OCI-LY7 (cell line): ENCODE measurements at regions of chr3 and their contacts with region 1.

Region 1: GRCh38 chr3:47324278-47324865 is 41.6 kb downstream of the KLHL18 start:
- DNase-seq: peak; percentile 81
- H3K4me3 ChIP-seq: no peak overlapping the region
- H3K27ac ChIP-seq: no peak overlapping the region
- H3K4me1 ChIP-seq: no peaks in the 10 kb centered on the region
- CTCF ChIP-seq: peak; percentile 88

Region 2: GRCh38 chr3:47250309-47251060 is 73.9 kb before region 1 on chr3:
- CTCF ChIA-PET with region 1: no interaction called
- POLR2A ChIA-PET with region 1: no interaction called
- intact Hi-C with region 1: loop called (anchors 1 kb)
- DNase-seq: peak; percentile 54
- H3K4me3 ChIP-seq: no peak overlapping the region
- H3K27ac ChIP-seq: no peak overlapping the region
- H3K4me1 ChIP-seq: no peaks in the 10 kb centered on the region
- CTCF ChIP-seq: peak; percentile 80

Region 3: GRCh38 chr3:47266709-47267489 is 57.5 kb before region 1 on chr3:
- CTCF ChIA-PET with region 1: no interaction called
- POLR2A ChIA-PET with region 1: no interaction called
- intact Hi-C with region 1: loop called (anchors 5 kb)
- DNase-seq: peak; percentile 42
- H3K4me3 ChIP-seq: no peak overlapping the region
- H3K27ac ChIP-seq: no peak overlapping the region
- H3K4me1 ChIP-seq: peaks cover 12% of the 10 kb centered on the region
- CTCF ChIP-seq: no peak

Region 4: GRCh38 chr3:47282424-47283192 is 41.8 kb before region 1 on chr3 and contains the starts of genes KIF9 and KLHL18:
- CTCF ChIA-PET with region 1: no interaction called
- POLR2A ChIA-PET with region 1: no interaction called
- intact Hi-C with region 1: loop called (anchors 5 kb)
- DNase-seq: peak; percentile 97
- H3K4me3 ChIP-seq: peak within 1 kb of the TSS; percentile 81
- H3K27ac ChIP-seq: peak within 1 kb of the TSS; percentile 71
- H3K4me1 ChIP-seq: peaks cover 45% of the 10 kb centered on the region
- CTCF ChIP-seq: no peak
- total RNA-seq, gene KIF9: 4.7 and 11.7 TPM in 2 replicates
- total RNA-seq, gene KLHL18: 11.8 and 13.1 TPM in 2 replicates

Region 5: DNA sequence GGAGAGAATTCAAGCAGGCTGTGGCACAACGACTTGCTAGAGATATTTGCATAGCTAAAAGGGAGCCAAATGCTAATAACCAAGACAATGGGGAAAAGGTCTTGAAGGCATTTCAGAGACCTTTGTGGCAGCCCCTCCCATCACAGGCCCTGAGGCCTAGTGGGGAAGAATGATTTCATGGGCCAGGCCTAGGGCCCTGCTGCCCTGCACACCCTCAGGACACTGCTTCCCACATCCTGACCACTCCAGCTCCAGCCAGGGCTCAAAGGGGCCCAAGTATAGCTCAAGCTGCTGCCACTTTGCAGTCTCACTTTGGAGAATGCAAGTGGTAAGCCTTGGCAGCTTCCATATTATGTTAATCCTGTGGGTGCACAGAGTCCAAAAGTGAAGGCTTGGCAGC is 35.0 kb after region 1 on chr3:
- CTCF ChIA-PET with region 1: no interaction called
- POLR2A ChIA-PET with region 1: no interaction called
- intact Hi-C with region 1: no loop called
- DNase-seq: no peak
- H3K4me3 ChIP-seq: no peak overlapping the region
- H3K27ac ChIP-seq: no peak overlapping the region
- H3K4me1 ChIP-seq: peaks cover 7% of the 10 kb centered on the region
- CTCF ChIP-seq: no peak